ENCODE measurements at regions of chr3 and their contacts with region 1.

Region 1: GRCh38 chr3:111210003-111210711 is 138.5 kb downstream of the NECTIN3 start:
- DNase-seq: no peak
- ATAC-seq: no peak
- H3K4me3 ChIP-seq: no peak overlapping the region
- H3K27ac ChIP-seq: no peak overlapping the region
- H3K4me1 ChIP-seq: no peaks in the 10 kb centered on the region
- H3K27me3 ChIP-seq: no peaks in the 10 kb centered on the region
- CTCF ChIP-seq: no peak
- POLR2A ChIP-seq: no peak

Region 2: DNA sequence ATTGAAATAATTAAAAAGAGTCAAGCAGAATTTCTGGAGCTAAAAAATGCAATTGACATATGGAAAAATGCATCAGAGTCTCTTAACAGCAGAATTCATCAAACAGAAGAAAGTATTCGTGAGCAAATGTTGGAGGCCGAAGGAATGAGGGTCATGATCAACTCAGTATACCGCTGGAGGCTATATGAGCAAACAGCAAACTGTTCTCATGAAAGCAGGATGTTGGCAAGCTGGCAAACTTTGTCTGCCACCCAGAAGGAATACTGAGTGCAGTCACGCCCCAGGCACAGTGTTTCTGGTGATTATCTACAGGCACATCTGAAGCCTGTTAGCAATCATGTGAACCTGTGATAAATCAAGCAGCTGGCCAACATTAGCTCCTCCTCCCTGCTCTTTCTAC is 225.3 kb before region 1 on chr3:
- intact Hi-C with region 1: no loop called
- DNase-seq: no peak
- ATAC-seq: no peak
- H3K4me3 ChIP-seq: no peak overlapping the region
- H3K27ac ChIP-seq: no peak overlapping the region
- H3K4me1 ChIP-seq: no peaks in the 10 kb centered on the region
- H3K27me3 ChIP-seq: no peaks in the 10 kb centered on the region
- CTCF ChIP-seq: no peak
- POLR2A ChIP-seq: no peak

Region 3: DNA sequence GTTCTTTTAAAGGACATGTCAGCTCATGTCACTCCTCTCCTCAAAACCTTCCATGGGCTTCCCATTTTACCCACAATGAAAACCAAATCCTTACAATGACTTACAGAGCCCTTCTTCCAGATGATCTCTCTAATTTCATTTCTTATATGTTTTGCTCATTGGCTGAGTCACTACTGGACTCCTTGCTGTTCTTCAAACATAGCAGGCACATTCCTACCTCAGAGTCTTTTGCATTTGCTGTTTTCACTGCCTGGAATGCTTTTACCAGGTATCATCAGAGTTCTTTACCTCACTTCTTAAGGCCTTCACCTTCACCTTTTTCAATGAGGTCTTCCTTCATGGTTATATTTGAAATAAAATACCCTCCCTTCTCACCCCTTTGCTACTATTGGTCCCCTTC is 81.3 kb before region 1 on chr3:
- intact Hi-C with region 1: loop called in 1 of 10 experiments (anchors 10 kb)
- DNase-seq: no peak
- ATAC-seq: no peak
- H3K4me3 ChIP-seq: no peak overlapping the region
- H3K27ac ChIP-seq: no peak overlapping the region
- H3K4me1 ChIP-seq: no peaks in the 10 kb centered on the region
- H3K27me3 ChIP-seq: no peaks in the 10 kb centered on the region
- CTCF ChIP-seq: no peak
- POLR2A ChIP-seq: no peak

Region 4: DNA sequence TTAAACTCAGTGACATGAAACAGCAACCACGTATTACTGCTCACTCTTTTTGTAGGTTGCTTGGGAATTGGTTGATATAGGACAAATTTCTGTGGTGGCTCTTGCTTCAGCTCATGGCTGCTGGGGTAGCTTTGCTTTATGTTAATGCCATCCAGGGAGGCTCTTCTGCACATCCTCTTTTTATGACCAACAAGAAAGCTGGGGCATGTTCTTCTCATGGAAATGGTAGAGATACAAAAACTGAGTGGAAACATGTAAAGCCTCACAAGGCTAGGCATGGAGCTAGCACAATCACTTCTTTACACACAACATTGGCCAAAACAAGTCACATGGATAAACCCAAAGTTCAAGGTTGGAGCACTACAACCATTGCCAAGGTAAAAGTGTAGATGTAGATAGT is 38.2 kb after region 1 on chr3:
- intact Hi-C with region 1: loop called in 1 of 10 experiments (anchors 2 kb)
- DNase-seq: no peak
- ATAC-seq: no peak
- H3K4me3 ChIP-seq: no peak overlapping the region
- H3K27ac ChIP-seq: no peak overlapping the region
- H3K4me1 ChIP-seq: no peaks in the 10 kb centered on the region
- H3K27me3 ChIP-seq: no peaks in the 10 kb centered on the region
- CTCF ChIP-seq: no peak
- POLR2A ChIP-seq: no peak

Region 5: GRCh38 chr3:111418391-111418790 is 208.2 kb after region 1 on chr3:
- intact Hi-C with region 1: no loop called
- DNase-seq: no peak
- ATAC-seq: no peak
- H3K4me3 ChIP-seq: no peak overlapping the region
- H3K27ac ChIP-seq: no peak overlapping the region
- H3K4me1 ChIP-seq: no peaks in the 10 kb centered on the region
- H3K27me3 ChIP-seq: no peaks in the 10 kb centered on the region
- CTCF ChIP-seq: no peak
- POLR2A ChIP-seq: no peak

Measured in heart left ventricle (tissue), 16 donors.